HepG2 (cell line): ENCODE measurements at regions of chr2 and their contacts with region 1.

Region 1: GRCh38 chr2:69914170-69914960 is 544 bp upstream of the MXD1 start:
- DNase-seq: peak; percentile 100
- ATAC-seq: peak; percentile 92
- H3K4me3 ChIP-seq: peak overlapping the region; percentile 56 to 69 (median 58)
- H3K27ac ChIP-seq: peak overlapping the region; percentile 89
- H3K4me1 ChIP-seq: peaks cover 37% of the 10 kb centered on the region
- H3K27me3 ChIP-seq: no peaks in the 10 kb centered on the region
- CTCF ChIP-seq: peak; percentile 96
- EP300 ChIP-seq: peak in 1 of 2 experiments; percentile 19; a peak in 2 of 4 replicates
- POLR2A ChIP-seq: peak; percentile 90 to 94
- RAD21 ChIP-seq: peak; percentile 91

Region 2: GRCh38 chr2:69893684-69894551 is 20.4 kb before region 1 on chr2 and contains the start of gene SNRNP27:
- CTCF ChIA-PET with region 1: no interaction called
- POLR2A ChIA-PET with region 1: interaction called, 37 read pairs
- in situ Hi-C with region 1: no loop called
- intact Hi-C with region 1: no loop called
- DNase-seq: peak; percentile 80
- ATAC-seq: peak; percentile 93
- H3K4me3 ChIP-seq: peak within 1 kb of the TSS; percentile 85 to 97 (median 90)
- H3K27ac ChIP-seq: peak within 1 kb of the TSS; percentile 60
- H3K4me1 ChIP-seq: peaks cover 24% of the 10 kb centered on the region
- H3K27me3 ChIP-seq: no peaks in the 10 kb centered on the region; a peak in 1 of 5 replicates
- CTCF ChIP-seq: no peak
- EP300 ChIP-seq: peak in 1 of 2 experiments; percentile 25; a peak in 1 of 4 replicates
- POLR2A ChIP-seq: peak; percentile 77 to 78
- RAD21 ChIP-seq: no peak
- total RNA-seq, gene SNRNP27: 54.6 and 80.8 TPM in 2 replicates

Region 3: DNA sequence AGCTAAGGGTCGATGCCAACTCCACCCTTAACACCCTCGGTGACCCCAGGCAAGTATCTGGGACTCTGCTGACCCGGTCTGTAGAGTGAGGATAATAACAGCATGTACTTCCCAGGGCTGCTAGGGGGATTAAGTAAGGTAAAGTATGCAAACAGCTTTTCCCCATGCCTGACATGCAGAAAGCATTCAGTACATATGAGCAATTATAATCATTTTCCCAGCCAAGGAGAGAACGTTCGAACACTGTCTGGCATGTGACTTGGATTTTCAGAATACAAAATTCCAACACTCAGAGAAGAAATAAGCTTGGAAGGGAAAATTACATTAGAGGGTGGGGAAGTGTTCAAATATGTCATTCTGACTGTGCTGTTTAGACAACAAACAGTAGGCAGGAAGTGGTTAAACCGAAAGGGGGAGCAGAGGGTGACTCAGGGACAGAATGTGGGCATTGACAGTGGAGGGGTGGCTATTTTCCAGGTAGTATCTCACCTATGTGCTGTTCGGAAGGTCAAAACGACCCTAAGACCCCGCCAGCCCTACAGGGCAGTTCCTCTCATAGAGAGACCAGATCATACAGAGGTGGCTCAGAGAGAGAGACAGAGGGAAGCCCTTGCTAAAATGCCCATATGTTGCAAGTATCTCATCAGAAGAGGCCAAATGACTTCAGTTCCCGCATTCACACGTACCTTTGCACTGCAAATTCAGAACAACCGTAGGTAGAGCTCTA is 32.1 kb after region 1 on chr2:
- CTCF ChIA-PET with region 1: no interaction called
- POLR2A ChIA-PET with region 1: interaction called, 77 read pairs
- in situ Hi-C with region 1: no loop called
- intact Hi-C with region 1: loop called (anchors 1 kb)
- DNase-seq: peak; percentile 82
- ATAC-seq: peak; percentile 62
- H3K4me3 ChIP-seq: peak overlapping the region; percentile 46 to 59 (median 48)
- H3K27ac ChIP-seq: peak overlapping the region; percentile 51
- H3K4me1 ChIP-seq: peaks cover 42% of the 10 kb centered on the region
- H3K27me3 ChIP-seq: no peaks in the 10 kb centered on the region
- CTCF ChIP-seq: 0 out of 2 replicates have a peak, but pooled peaks have one; percentile 7
- EP300 ChIP-seq: peak in 1 of 2 experiments; percentile 89; a peak in 2 of 4 replicates
- POLR2A ChIP-seq: no peak
- RAD21 ChIP-seq: no peak

Region 4: DNA sequence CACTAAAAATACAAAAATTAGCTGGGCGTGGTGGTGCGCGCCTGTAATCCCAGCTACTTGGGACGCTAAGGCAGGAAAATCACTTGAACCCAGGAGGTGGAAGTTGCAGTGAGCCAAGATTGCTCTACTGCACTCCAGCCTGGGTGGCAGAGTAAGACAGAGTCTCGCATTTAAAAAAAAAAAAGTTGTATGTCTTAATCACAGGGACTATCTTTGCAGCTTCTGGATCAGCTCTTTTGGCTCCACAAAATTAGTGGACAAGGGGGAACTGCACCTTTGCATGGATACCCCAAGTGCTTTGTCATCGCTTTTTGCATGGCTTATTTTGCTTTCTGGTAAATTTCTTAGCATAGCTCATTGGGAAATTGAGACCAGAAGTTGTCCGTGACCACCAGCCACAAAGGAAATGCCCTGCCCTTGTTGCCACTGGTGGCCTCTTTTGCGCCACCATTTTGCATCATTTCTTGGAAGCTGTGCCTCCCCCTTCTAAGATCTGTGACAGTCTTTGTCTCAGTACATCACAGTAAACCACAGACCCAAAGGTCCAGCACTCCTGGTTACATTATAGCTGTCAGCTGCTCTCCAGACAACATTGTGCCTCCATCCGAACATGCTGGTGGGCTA is 129.0 kb after region 1 on chr2:
- CTCF ChIA-PET with region 1: no interaction called
- POLR2A ChIA-PET with region 1: interaction called, 11 read pairs
- in situ Hi-C with region 1: no loop called
- intact Hi-C with region 1: no loop called
- DNase-seq: no peak
- ATAC-seq: no peak
- H3K4me3 ChIP-seq: no peak overlapping the region
- H3K27ac ChIP-seq: no peak overlapping the region
- H3K4me1 ChIP-seq: peaks cover 9% of the 10 kb centered on the region
- H3K27me3 ChIP-seq: no peaks in the 10 kb centered on the region
- CTCF ChIP-seq: no peak
- EP300 ChIP-seq: no peak
- POLR2A ChIP-seq: no peak
- RAD21 ChIP-seq: no peak

Region 5: DNA sequence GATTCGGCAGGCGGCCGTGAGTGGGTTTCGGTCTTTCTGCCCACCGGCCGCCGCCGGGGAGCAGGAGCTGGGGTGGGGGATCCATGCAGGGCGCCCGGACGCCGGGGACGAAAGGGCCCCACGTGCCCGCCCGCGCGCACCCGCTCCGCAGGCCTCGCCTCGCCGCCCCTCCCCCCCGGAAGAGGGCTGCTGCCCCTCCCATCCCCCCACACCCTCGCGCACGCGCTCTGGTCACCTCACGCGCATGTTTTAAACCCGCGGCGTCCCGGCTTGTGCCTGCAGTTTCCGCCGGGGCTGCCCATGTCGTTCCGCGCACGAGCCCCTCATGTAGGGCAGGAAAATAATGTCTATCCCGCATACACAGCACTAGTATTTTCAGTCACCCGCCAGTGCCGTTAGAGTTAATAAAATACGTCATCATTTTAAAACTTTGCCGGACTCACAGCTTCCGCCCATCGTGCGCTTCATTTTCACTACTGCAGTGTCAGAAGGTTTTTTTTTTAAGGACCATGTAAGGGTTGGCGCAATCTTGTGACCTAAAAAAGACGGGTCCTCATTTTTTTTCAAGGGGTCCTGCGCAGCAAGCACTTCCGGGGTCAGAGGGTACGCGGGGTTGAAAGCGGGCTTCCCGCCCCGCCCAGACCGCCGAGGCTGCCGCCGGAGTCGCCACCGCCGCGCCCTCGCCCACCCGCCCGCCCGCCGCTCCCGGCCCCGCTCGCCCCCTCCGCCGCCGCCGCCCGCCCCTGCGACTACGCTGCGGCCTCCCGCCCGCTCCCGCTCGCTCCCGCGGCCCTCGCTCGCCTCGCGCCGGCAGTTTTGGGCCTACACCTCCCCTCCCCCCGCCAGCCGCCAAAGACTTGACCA is 172.7 kb after region 1 on chr2 and contains the start of gene PCBP1:
- CTCF ChIA-PET with region 1: no interaction called
- POLR2A ChIA-PET with region 1: interaction called, 282 read pairs
- in situ Hi-C with region 1: no loop called
- intact Hi-C with region 1: loop called (anchors 5 kb)
- DNase-seq: peak; percentile 94
- ATAC-seq: peak; percentile 49
- H3K4me3 ChIP-seq: peak within 1 kb of the TSS; percentile 93 to 95 (median 95)
- H3K27ac ChIP-seq: peak within 1 kb of the TSS; percentile 99
- H3K4me1 ChIP-seq: peaks cover 56% of the 10 kb centered on the region
- H3K27me3 ChIP-seq: no peaks in the 10 kb centered on the region; a peak in 1 of 5 replicates
- CTCF ChIP-seq: no peak
- EP300 ChIP-seq: no peak; a peak in 2 of 4 replicates
- POLR2A ChIP-seq: peak; percentile 71 to 81
- RAD21 ChIP-seq: peak; percentile 50; the same call in 1 of the 2 replicates
- total RNA-seq, gene PCBP1: 32.0 and 104 TPM in 2 replicates

Region 6: GRCh38 chr2:70142590-70143313 is 228.4 kb after region 1 on chr2:
- CTCF ChIA-PET with region 1: interaction called, 15 read pairs
- POLR2A ChIA-PET with region 1: interaction called, 83 read pairs
- in situ Hi-C with region 1: loop called (anchors 5 kb)
- intact Hi-C with region 1: loop called (anchors 1 kb)
- DNase-seq: peak; percentile 99
- ATAC-seq: peak; percentile 68
- H3K4me3 ChIP-seq: peak overlapping the region; percentile 43 to 67 (median 61)
- H3K27ac ChIP-seq: peak overlapping the region; percentile 93
- H3K4me1 ChIP-seq: peaks cover 56% of the 10 kb centered on the region
- H3K27me3 ChIP-seq: no peaks in the 10 kb centered on the region
- CTCF ChIP-seq: peak; percentile 100
- EP300 ChIP-seq: peak; percentile 72 to 87
- POLR2A ChIP-seq: peak in 1 of 2 experiments; percentile 55; a peak in 2 of 4 replicates
- RAD21 ChIP-seq: peak; percentile 100

Region 7: DNA sequence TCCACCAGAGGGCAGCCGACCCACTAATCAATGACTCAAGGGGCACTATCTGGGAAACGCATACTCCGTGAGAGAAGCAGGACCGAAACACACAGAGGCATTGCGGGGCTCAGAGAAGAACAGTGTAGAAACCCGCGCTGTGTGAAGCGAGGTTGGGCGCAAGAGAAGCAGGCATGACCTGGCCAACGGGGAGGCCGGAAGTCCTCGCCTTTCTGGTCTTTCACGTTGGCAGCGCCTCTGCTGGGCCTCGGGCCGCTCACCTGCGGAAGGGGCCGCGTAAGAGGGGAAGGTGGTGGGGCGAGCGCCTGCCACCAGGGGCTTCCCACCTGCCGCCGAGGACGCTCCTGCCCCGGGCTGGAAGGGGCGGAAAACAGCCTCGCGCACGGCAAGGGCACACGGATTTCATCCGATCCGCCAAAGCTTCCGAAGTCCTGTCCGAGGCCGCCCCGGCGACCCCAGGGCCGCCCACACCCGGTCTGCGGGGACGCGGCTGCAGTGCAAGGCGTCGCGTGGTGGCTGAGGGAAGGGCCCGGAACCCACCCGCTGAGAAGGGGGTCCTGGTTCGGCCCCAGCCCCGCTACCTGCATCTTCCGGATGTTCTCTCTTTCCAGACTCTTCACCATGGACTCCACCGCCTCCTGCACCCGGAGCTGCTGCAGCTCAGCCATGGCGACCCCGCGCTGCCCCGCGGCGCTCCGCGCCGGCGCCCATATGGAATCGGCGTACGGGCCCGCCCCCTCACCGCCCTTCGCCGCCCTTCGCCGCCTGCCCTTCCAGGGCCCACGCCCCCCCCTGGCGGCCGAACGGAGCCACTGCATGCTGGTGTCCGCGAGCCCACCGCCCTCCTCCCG is 387.2 kb after region 1 on chr2 and contains the start of gene FAM136A:
- CTCF ChIA-PET with region 1: interaction called, 6 read pairs
- POLR2A ChIA-PET with region 1: interaction called, 8 read pairs
- in situ Hi-C with region 1: no loop called
- intact Hi-C with region 1: loop called (anchors 5 kb)
- DNase-seq: peak; percentile 87
- ATAC-seq: peak; percentile 94
- H3K4me3 ChIP-seq: peak within 1 kb of the TSS; percentile 62 to 92 (median 90)
- H3K27ac ChIP-seq: peak within 1 kb of the TSS; percentile 85
- H3K4me1 ChIP-seq: peaks cover 21% of the 10 kb centered on the region
- H3K27me3 ChIP-seq: peaks cover 0 to 7% of the 10 kb centered on the region in 2 experiments; a peak in 2 of 5 replicates
- CTCF ChIP-seq: peak; percentile 91
- EP300 ChIP-seq: 0 out of 4 replicates have a peak, but pooled peaks have one; percentile 17 to 29
- POLR2A ChIP-seq: peak; percentile 92 to 96
- RAD21 ChIP-seq: peak; percentile 70
- total RNA-seq, gene FAM136A: 126 and 153 TPM in 2 replicates